GM12878 (cell line): ENCODE measurements at regions of chr6 and their contacts with region 1.

Region 1: GRCh38 chr6:30742316-30743098 is at the start of gene FLOT1:
- DNase-seq: peak; percentile 80
- ATAC-seq: peak; percentile 80
- H3K4me3 ChIP-seq: peak within 1 kb of the TSS; percentile 95
- H3K27ac ChIP-seq: peak within 1 kb of the TSS; percentile 72
- H3K4me1 ChIP-seq: peaks cover 23% of the 10 kb centered on the region
- H3K27me3 ChIP-seq: no peaks in the 10 kb centered on the region
- CTCF ChIP-seq: no peak
- EP300 ChIP-seq: peak in 1 of 2 experiments; percentile 12; a peak in 1 of 4 replicates
- POLR2A ChIP-seq: peak; percentile 83
- RAD21 ChIP-seq: no peak
- polyA plus RNA-seq, gene FLOT1: 12.3 to 16.8 TPM

Region 2: DNA sequence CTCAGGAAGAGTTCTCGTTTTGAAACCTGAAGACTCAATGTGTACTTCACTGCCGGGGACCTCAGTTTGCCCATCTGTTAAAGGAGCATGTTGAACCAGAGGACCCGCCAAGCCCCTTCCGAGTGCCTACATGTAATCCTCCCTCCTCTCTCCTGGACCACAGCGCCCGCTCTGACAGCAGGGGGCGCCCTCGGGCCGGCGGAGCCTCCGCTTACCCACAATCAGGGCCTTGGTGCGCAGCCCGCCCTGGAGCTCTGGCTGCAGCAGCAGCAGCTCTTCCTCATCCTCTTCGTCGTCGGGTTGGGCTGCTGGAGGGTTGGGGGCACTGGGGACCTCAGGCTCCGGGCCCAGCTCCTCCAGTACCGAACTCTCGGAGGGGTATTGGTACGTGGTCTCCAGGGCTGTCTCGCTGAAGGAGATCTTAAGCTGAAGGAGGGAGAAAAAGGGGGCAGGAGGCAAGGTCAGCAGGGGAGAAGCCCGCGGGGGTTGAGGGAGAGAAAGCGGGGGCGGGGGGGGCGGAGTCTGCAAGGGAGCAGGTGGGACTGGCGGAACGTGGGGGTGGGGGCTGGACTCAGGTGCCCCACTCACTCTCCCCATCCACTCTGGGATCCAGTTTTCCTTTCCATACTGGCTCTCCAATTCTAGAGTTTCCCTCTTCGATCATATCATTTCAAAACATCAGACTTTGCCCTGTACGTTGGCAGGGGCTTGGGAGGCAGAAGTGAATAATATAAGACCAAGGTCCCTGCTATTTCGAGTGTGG is 63.4 kb before region 1 on chr6:
- CTCF ChIA-PET with region 1: interaction called, 10 read pairs
- POLR2A ChIA-PET with region 1: interaction called, 5 read pairs
- RAD21 ChIA-PET with region 1: interaction called, 232 read pairs
- SMC1A ChIA-PET with region 1: interaction called, 5 read pairs
- in situ Hi-C with region 1: no loop called
- intact Hi-C with region 1: no loop called
- DNase-seq: no peak
- ATAC-seq: peak; percentile 79
- H3K4me3 ChIP-seq: peak overlapping the region; percentile 100
- H3K27ac ChIP-seq: peak overlapping the region; percentile 65
- H3K4me1 ChIP-seq: peaks cover 8% of the 10 kb centered on the region
- H3K27me3 ChIP-seq: no peaks in the 10 kb centered on the region
- CTCF ChIP-seq: peak; percentile 97 to 98 (median 98); a peak in 5 of 6 replicates
- EP300 ChIP-seq: no peak
- POLR2A ChIP-seq: 0 out of 2 replicates have a peak, but pooled peaks have one; percentile 29
- RAD21 ChIP-seq: peak; percentile 97

Region 3: DNA sequence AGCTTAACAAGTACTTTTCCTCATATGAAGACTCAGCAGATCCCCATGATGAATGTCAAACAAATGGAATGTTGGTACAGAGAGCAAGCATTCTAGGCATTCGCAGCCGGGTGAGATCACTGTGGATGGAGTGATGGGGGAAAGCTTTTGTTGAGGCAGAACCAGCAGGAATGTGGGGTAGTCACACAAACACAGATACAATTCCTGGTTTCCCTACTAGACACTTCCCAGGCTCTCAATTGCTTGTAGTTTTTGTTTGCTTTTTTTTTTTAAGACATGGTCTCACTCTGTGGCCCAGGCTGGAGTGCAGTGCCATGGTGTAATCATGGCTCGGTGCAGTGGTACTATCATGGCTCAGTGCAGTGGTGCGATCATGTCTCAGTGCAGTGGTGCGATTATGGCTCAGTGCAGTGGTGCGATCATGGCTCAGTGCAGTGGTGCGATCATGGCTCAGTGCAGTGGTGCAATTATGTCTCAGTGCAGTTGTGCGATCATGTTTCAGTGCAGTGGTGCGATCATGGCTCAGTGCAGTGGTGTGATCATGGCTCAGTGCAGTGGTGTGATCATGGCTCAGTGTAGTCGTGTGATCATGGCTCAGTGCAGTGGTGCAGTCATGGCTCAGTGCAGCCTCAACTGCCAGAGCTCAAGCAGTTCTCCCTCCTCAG is 17.2 kb after region 1 on chr6:
- CTCF ChIA-PET with region 1: interaction called, 18 read pairs
- POLR2A ChIA-PET with region 1: interaction called, 41 read pairs
- RAD21 ChIA-PET with region 1: interaction called, 60 read pairs
- SMC1A ChIA-PET with region 1: interaction called, 122 read pairs
- in situ Hi-C with region 1: no loop called
- intact Hi-C with region 1: loop called (anchors 1 kb)
- DNase-seq: no peak
- ATAC-seq: no peak
- H3K4me3 ChIP-seq: no peak overlapping the region
- H3K27ac ChIP-seq: peak overlapping the region; percentile 35; the same call in 1 of the 2 replicates
- H3K4me1 ChIP-seq: peaks cover 22% of the 10 kb centered on the region; the same call in 1 of the 2 replicates
- H3K27me3 ChIP-seq: no peaks in the 10 kb centered on the region
- CTCF ChIP-seq: no peak
- EP300 ChIP-seq: no peak
- POLR2A ChIP-seq: no peak
- RAD21 ChIP-seq: no peak

Region 4: DNA sequence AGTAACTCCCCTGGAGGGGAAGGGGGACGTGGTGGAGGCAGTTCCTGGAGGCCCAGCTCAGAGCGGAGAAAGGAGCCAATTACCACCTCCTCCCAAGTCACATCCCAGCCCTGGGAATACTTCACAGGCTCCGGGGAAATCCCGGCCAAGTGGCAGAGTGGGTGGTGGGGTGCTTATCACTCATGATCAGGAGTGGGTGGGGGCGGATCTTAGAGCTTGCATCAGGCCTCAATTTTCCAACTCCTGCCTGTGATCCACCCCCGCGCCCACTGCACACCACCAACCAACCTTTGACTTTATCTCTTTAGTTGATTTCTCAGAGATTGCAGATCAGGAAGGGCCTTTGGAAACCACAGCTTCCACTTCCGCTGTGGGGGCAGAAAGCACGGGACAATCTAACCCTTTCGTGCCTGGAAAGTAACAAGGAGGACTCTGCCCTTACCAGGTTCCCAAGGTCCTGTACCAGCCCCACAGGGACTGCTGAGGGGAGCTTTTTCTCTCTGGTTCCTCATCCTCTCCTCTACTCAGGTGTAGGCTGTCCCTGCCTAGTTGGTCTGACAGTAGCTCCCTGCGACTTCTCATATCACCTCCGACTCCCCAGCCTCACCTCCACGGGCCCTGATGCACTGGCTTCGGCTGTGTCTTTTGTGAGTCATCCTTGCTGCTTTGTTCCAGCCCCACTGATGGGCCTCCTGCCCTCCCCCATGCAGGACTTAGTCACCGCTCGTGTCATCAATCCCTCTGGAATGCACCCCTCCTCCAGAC is 26.8 kb after region 1 on chr6:
- CTCF ChIA-PET with region 1: interaction called, 7 read pairs
- POLR2A ChIA-PET with region 1: interaction called, 89 read pairs
- RAD21 ChIA-PET with region 1: interaction called, 48 read pairs
- SMC1A ChIA-PET with region 1: interaction called, 122 read pairs
- in situ Hi-C with region 1: no loop called
- intact Hi-C with region 1: no loop called
- DNase-seq: no peak
- ATAC-seq: peak; percentile 38
- H3K4me3 ChIP-seq: no peak overlapping the region
- H3K27ac ChIP-seq: no peak overlapping the region; the same call in 1 of the 2 replicates
- H3K4me1 ChIP-seq: peaks cover 33% of the 10 kb centered on the region
- H3K27me3 ChIP-seq: no peaks in the 10 kb centered on the region
- CTCF ChIP-seq: no peak
- EP300 ChIP-seq: peak in 1 of 2 experiments; percentile 56; a peak in 2 of 4 replicates
- POLR2A ChIP-seq: no peak
- RAD21 ChIP-seq: no peak

Region 5: GRCh38 chr6:30800871-30801270 is 58.4 kb after region 1 on chr6:
- CTCF ChIA-PET with region 1: no interaction called
- POLR2A ChIA-PET with region 1: no interaction called
- RAD21 ChIA-PET with region 1: no interaction called
- SMC1A ChIA-PET with region 1: no interaction called
- in situ Hi-C with region 1: no loop called
- intact Hi-C with region 1: no loop called
- DNase-seq: no peak
- ATAC-seq: no peak
- H3K4me3 ChIP-seq: no peak overlapping the region
- H3K27ac ChIP-seq: no peak overlapping the region
- H3K4me1 ChIP-seq: no peaks in the 10 kb centered on the region
- H3K27me3 ChIP-seq: no peaks in the 10 kb centered on the region
- CTCF ChIP-seq: no peak
- EP300 ChIP-seq: no peak
- POLR2A ChIP-seq: no peak
- RAD21 ChIP-seq: no peak

Region 6: GRCh38 chr6:30883685-30884520 is 141.4 kb after region 1 on chr6 and contains the start of gene DDR1:
- CTCF ChIA-PET with region 1: no interaction called
- POLR2A ChIA-PET with region 1: interaction called, 16 read pairs
- RAD21 ChIA-PET with region 1: interaction called, 13 read pairs
- SMC1A ChIA-PET with region 1: interaction called, 4 read pairs
- in situ Hi-C with region 1: no loop called
- intact Hi-C with region 1: no loop called
- DNase-seq: no peak
- ATAC-seq: peak; percentile 65
- H3K4me3 ChIP-seq: peak within 1 kb of the TSS; percentile 75
- H3K27ac ChIP-seq: peak within 1 kb of the TSS; percentile 81
- H3K4me1 ChIP-seq: peaks cover 38% of the 10 kb centered on the region
- H3K27me3 ChIP-seq: no peaks in the 10 kb centered on the region
- CTCF ChIP-seq: no peak
- EP300 ChIP-seq: no peak
- POLR2A ChIP-seq: peak; percentile 18; the same call in 1 of the 2 replicates
- RAD21 ChIP-seq: no peak
- polyA plus RNA-seq, gene DDR1: 1.1 to 2.2 TPM